Activated naive CD4-positive, alpha-beta T cell treated with anti-CD3 and anti-CD28 coated beads, Interleukin-2, amount 10 ng/mL, durations not matched to agents 7 days and 5 days (primary cell): ENCODE measurements at regions of chr16 and their contacts with region 1.

Region 1: DNA sequence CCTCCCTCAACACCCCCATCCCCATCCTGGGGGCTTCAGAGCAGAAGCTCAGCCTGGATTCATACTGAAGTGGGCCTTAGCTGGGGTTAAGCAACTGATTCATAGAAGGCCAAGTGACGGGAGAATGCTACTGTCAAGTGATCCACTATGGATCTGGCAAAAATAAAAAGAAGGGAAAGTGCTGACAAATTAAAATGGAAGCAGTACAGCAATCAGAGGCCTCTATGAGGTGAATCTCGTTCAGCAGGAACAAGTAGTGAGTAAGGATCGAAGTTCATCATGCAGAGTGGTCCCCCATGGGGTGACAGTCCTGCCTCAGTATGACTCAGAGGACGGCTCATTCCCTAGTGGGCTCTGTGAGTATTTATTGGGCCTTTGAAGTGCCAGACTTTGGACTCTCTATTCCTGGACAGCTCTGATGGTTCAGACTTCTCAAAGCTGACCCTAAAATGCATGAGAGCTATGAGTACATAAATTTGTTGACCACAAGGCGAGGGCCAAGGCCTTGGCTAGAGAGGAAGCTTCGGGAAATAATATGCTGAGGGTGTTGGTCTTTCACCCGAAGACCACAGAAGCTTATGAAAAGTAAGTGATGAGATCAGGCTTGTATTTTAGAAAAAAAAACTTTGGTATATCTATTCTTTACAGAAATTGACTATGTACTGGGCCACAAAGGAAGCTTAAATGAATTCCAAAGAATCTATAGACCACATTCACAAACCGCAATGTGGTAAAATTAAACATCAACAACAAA is 5.3 kb upstream of the NSMCE1 start:
- DNase-seq: peak; percentile 39
- H3K4me3 Mint-ChIP-seq: peak overlapping the region; percentile 50
- H3K27ac Mint-ChIP-seq: peak overlapping the region; percentile 94
- H3K4me1 Mint-ChIP-seq: peaks cover 70% of the 10 kb centered on the region
- H3K27me3 Mint-ChIP-seq: peaks cover 5% of the 10 kb centered on the region

Region 2: DNA sequence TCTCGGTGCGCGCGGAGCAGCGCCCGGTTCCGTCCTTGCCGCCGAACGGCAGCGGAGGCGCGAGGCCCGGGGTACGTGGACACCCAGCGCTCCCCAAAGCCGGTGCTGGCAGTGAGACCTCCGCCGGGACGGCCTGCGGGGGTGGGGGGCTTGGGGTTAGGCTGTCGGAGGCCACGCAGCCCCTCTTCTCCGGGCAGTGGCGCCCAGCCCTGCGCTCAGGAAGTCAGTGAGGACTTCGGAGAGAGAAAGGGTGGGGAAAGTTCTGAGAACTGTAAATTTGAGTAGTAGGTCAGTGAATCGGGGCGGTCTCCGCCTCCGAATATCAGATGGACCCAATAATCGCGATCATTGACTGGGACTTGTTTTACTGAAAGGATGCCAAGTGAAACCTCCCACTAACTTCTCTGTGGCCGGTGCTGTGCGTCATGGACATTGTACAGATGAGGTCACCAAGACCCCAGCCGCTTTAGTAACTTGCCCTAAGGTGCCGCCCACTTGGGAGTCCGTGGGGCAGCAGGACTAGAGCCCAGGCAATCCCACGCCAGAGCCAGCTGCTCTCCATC is 40.4 kb after region 1 on chr16:
- CTCF ChIA-PET with region 1: interaction called, 26 read pairs
- DNase-seq: peak; percentile 75
- H3K4me3 Mint-ChIP-seq: peak overlapping the region; percentile 94
- H3K27ac Mint-ChIP-seq: peak overlapping the region; percentile 95
- H3K4me1 Mint-ChIP-seq: peaks cover 41% of the 10 kb centered on the region
- H3K27me3 Mint-ChIP-seq: peaks cover 27% of the 10 kb centered on the region

Region 3: GRCh38 chr16:27972500-27972899 is 698.7 kb after region 1 on chr16:
- CTCF ChIA-PET with region 1: no interaction called
- DNase-seq: peak; percentile 74
- H3K4me3 Mint-ChIP-seq: no peak overlapping the region
- H3K27ac Mint-ChIP-seq: no peak overlapping the region
- H3K4me1 Mint-ChIP-seq: peaks cover 4% of the 10 kb centered on the region
- H3K27me3 Mint-ChIP-seq: peaks cover 30% of the 10 kb centered on the region